ENCODE measurements at regions of chr1 and their contacts with region 1.

Region 1: GRCh38 chr1:160006312-160006940 is 25.4 kb downstream of the PIGM start:
- DNase-seq: peak; percentile 75 to 86 (median 83)
- ATAC-seq: peak; percentile 96
- H3K4me3 ChIP-seq: no peak overlapping the region
- H3K27ac ChIP-seq: no peak overlapping the region
- H3K4me1 ChIP-seq: no peaks in the 10 kb centered on the region
- H3K27me3 ChIP-seq: peaks cover 0 to 2% of the 10 kb centered on the region in 2 experiments; a peak in 2 of 5 replicates
- CTCF ChIP-seq: peak; percentile 91 to 92 (median 92)
- EP300 ChIP-seq: no peak
- POLR2A ChIP-seq: no peak
- RAD21 ChIP-seq: peak; percentile 86 to 87

Region 2: DNA sequence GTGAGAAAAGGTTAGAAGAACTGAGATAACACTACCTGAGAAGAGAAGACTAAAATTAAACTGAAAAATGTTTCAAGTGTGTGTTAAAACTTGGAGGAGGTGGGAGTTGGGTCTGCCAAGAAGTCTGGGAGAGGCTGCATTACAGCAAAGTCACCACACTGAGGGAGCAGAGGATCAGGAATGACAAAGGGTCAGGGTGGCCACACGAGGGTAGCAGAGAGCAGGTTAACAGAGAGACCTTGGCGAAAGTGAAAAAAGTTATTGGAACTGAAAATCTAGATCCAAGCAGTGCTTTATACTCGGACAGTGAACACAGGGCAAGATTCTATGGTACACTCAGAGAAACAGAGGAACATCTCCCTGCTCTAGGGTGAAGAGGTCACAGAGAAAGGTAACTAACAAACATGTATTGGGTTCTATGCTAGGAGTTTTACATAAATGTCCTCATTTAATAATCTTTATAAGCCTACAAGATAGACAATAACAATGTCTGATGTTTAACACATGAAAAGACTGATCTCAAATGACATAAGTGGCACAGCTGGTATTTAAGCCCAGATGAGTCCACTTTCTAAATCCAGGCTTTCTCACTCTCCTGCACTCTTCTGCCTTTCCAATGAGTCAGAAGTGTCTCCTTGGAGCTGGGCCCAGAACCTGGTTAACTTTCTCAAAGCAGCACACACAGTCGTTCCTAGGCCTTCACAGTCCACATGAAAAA is 845.3 kb before region 1 on chr1:
- CTCF ChIA-PET with region 1: interaction called, 12 read pairs
- POLR2A ChIA-PET with region 1: no interaction called
- in situ Hi-C with region 1: no loop called
- intact Hi-C with region 1: no loop called
- DNase-seq: peak; percentile 73 to 78 (median 75)
- ATAC-seq: peak; percentile 98
- H3K4me3 ChIP-seq: no peak overlapping the region
- H3K27ac ChIP-seq: no peak overlapping the region
- H3K4me1 ChIP-seq: no peaks in the 10 kb centered on the region
- H3K27me3 ChIP-seq: peaks cover 0 to 4% of the 10 kb centered on the region in 2 experiments; a peak in 3 of 5 replicates
- CTCF ChIP-seq: peak; percentile 99 to 100 (median 100)
- EP300 ChIP-seq: no peak
- POLR2A ChIP-seq: no peak
- RAD21 ChIP-seq: peak; percentile 100

Region 3: DNA sequence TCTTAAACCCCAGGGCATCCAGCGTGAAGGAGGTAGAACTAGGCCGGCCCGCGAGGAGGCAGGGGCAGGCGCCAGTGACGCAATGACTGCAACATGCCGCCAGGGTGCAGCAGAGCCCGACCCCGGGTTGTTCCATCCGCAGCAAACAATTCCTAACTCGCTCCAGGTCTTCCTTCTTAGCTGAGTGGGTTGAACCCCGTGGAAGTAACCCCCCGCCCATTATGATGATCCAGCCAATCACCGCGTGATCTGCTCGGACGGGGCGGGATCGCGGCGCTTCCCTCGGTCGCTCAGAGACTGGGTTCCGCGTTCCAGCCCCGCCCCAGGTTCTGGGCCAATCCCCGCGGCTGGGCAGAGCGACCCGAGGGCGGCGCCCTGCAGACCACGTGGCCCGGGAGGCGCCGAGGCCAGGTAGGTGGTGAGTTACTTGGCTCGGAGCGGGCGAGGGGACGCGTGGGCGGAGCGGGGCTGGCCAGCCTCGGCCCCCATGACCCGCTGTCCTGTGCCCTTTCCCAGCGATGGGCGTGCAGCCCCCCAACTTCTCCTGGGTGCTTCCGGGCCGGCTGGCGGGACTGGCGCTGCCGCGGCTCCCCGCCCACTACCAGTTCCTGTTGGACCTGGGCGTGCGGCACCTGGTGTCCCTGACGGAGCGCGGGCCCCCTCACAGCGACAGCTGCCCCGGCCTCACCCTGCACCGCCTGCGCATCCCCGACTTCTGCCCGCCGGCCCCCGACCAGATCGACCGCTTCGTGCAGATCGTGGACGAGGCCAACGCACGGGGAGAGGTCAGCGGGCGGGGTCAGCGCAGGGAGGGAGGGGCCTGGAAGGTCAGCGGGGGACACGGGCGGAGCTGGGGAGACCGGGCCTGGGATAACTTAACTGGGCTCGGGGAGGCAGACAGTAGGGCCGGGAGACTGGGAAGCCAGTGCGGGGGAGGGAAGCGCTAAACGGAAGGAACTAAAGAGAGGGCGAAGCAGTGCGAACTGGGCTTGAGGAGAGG is 225.5 kb before region 1 on chr1 and contains the start of gene DUSP23:
- CTCF ChIA-PET with region 1: interaction called, 4 read pairs
- POLR2A ChIA-PET with region 1: interaction called, 3 read pairs
- in situ Hi-C with region 1: no loop called
- intact Hi-C with region 1: loop called (anchors 5 kb)
- DNase-seq: peak; percentile 95 to 99 (median 98)
- ATAC-seq: peak; percentile 100
- H3K4me3 ChIP-seq: peak within 1 kb of the TSS; percentile 46
- H3K27ac ChIP-seq: peak within 1 kb of the TSS; percentile 58
- H3K4me1 ChIP-seq: peaks cover 0 to 17% of the 10 kb centered on the region in 2 experiments; a peak in 3 of 5 replicates
- H3K27me3 ChIP-seq: peaks cover 0 to 3% of the 10 kb centered on the region in 2 experiments; a peak in 1 of 5 replicates
- CTCF ChIP-seq: peak; percentile 94 to 98 (median 97)
- EP300 ChIP-seq: no peak
- POLR2A ChIP-seq: peak; percentile 68
- RAD21 ChIP-seq: peak; percentile 91 to 92
- polyA plus RNA-seq, gene DUSP23: 1.0 to 3.0 TPM

Region 4: GRCh38 chr1:159798893-159799292 is 207.5 kb before region 1 on chr1:
- CTCF ChIA-PET with region 1: interaction called, 44 read pairs
- POLR2A ChIA-PET with region 1: interaction called, 3 read pairs
- in situ Hi-C with region 1: loop called (anchors 5 kb)
- intact Hi-C with region 1: loop called (anchors 1 kb)
- DNase-seq: peak; percentile 66 to 67 (median 66)
- ATAC-seq: peak; percentile 94
- H3K4me3 ChIP-seq: no peak overlapping the region
- H3K27ac ChIP-seq: no peak overlapping the region
- H3K4me1 ChIP-seq: no peaks in the 10 kb centered on the region
- H3K27me3 ChIP-seq: peaks cover 27 to 37% of the 10 kb centered on the region in 2 experiments
- CTCF ChIP-seq: peak; percentile 75 to 87 (median 76)
- EP300 ChIP-seq: no peak
- POLR2A ChIP-seq: no peak
- RAD21 ChIP-seq: peak; percentile 75 to 89

Region 5: GRCh38 chr1:159835862-159836525 is 170.4 kb before region 1 on chr1:
- CTCF ChIA-PET with region 1: interaction called, 3 read pairs
- POLR2A ChIA-PET with region 1: interaction called, 3 read pairs
- in situ Hi-C with region 1: no loop called
- intact Hi-C with region 1: loop called (anchors 2 kb)
- DNase-seq: peak in 2 of 4 experiments; percentile 16 to 26
- ATAC-seq: peak; percentile 52; the same call in 2 of the 3 replicates
- H3K4me3 ChIP-seq: no peak overlapping the region
- H3K27ac ChIP-seq: no peak overlapping the region
- H3K4me1 ChIP-seq: peaks cover 0 to 3% of the 10 kb centered on the region in 2 experiments; a peak in 1 of 5 replicates
- H3K27me3 ChIP-seq: peaks cover 7 to 32% of the 10 kb centered on the region in 2 experiments
- CTCF ChIP-seq: peak; percentile 30 to 59 (median 48); a peak in 5 of 6 replicates
- EP300 ChIP-seq: no peak
- POLR2A ChIP-seq: no peak
- RAD21 ChIP-seq: peak; percentile 48 to 66

Region 6: GRCh38 chr1:159936273-159936904 is 70.0 kb before region 1 on chr1:
- CTCF ChIA-PET with region 1: interaction called, 75 read pairs
- POLR2A ChIA-PET with region 1: no interaction called
- in situ Hi-C with region 1: loop called (anchors 5 kb)
- intact Hi-C with region 1: loop called (anchors 1 kb)
- DNase-seq: peak; percentile 68 to 84 (median 82)
- ATAC-seq: peak; percentile 89
- H3K4me3 ChIP-seq: no peak overlapping the region
- H3K27ac ChIP-seq: no peak overlapping the region
- H3K4me1 ChIP-seq: peaks cover 4 to 22% of the 10 kb centered on the region in 2 experiments; a peak in 4 of 5 replicates
- H3K27me3 ChIP-seq: peaks cover 11 to 55% of the 10 kb centered on the region in 2 experiments
- CTCF ChIP-seq: peak; percentile 93 to 95 (median 94)
- EP300 ChIP-seq: no peak
- POLR2A ChIP-seq: no peak
- RAD21 ChIP-seq: peak; percentile 92 to 93

Region 7: DNA sequence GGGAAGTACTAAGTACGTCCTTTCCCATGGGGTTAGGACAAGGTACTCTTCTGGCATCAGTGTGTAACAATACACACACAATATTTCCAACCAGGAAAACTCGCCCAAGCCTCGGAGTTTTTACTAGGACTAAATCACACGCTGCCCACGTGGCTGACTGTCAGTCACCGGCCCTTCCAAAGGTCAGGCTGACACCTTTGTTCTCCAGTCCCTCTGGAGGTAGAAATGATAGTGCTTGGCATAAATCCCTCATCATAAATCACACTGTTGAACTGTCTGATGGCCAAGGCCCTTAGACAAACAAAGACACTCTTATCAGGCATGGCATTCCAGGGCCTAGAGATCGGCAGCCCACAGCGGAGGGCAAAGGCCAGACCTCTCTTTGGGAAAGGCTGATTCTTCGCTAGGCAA is 35.5 kb before region 1 on chr1:
- CTCF ChIA-PET with region 1: no interaction called
- POLR2A ChIA-PET with region 1: no interaction called
- in situ Hi-C with region 1: no loop called
- intact Hi-C with region 1: no loop called
- DNase-seq: peak in 1 of 4 experiments; percentile 11
- ATAC-seq: no peak
- H3K4me3 ChIP-seq: no peak overlapping the region
- H3K27ac ChIP-seq: no peak overlapping the region
- H3K4me1 ChIP-seq: no peaks in the 10 kb centered on the region
- H3K27me3 ChIP-seq: peaks cover 7 to 40% of the 10 kb centered on the region in 2 experiments; a peak in 4 of 5 replicates
- CTCF ChIP-seq: no peak
- EP300 ChIP-seq: no peak
- POLR2A ChIP-seq: no peak
- RAD21 ChIP-seq: no peak

Region 8: GRCh38 chr1:160018900-160019299 is 12.5 kb after region 1 on chr1:
- CTCF ChIA-PET with region 1: interaction called, 3 read pairs
- POLR2A ChIA-PET with region 1: interaction called, 10 read pairs
- in situ Hi-C with region 1: no loop called
- intact Hi-C with region 1: no loop called
- DNase-seq: no peak
- ATAC-seq: no peak
- H3K4me3 ChIP-seq: no peak overlapping the region
- H3K27ac ChIP-seq: no peak overlapping the region
- H3K4me1 ChIP-seq: peaks cover 0 to 11% of the 10 kb centered on the region in 2 experiments; a peak in 2 of 5 replicates
- H3K27me3 ChIP-seq: peaks cover 2 to 7% of the 10 kb centered on the region in 2 experiments; a peak in 2 of 5 replicates
- CTCF ChIP-seq: no peak
- EP300 ChIP-seq: no peak
- POLR2A ChIP-seq: no peak
- RAD21 ChIP-seq: no peak

Measured in K562 (cell line).